T-cell (primary cell): ENCODE measurements at regions of chr3 and their contacts with region 1.

Region 1: GRCh38 chr3:132445817-132446216 is 28.5 kb downstream of the DNAJC13 start:
- DNase-seq: no peak
- ATAC-seq: no peak
- H3K4me3 ChIP-seq: no peak overlapping the region
- H3K4me3 Mint-ChIP-seq: no peak overlapping the region
- H3K27ac ChIP-seq: no peak overlapping the region
- H3K27ac Mint-ChIP-seq: no peak overlapping the region
- H3K4me1 ChIP-seq: peaks cover 0 to 8% of the 10 kb centered on the region in 2 experiments
- H3K4me1 Mint-ChIP-seq: peaks cover 9 to 26% (median 26%) of the 10 kb centered on the region in 3 donors
- H3K27me3 ChIP-seq: no peaks in the 10 kb centered on the region
- H3K27me3 Mint-ChIP-seq: no peaks in the 10 kb centered on the region

Region 2: GRCh38 chr3:132124651-132125284 is 321.0 kb before region 1 on chr3:
- CTCF ChIA-PET with region 1: no interaction called
- POLR2A ChIA-PET with region 1: no interaction called
- DNase-seq: no peak
- ATAC-seq: no peak
- H3K4me3 ChIP-seq: no peak overlapping the region
- H3K4me3 Mint-ChIP-seq: no peak overlapping the region
- H3K27ac ChIP-seq: no peak overlapping the region
- H3K27ac Mint-ChIP-seq: no peak overlapping the region
- H3K4me1 ChIP-seq: no peaks in the 10 kb centered on the region
- H3K4me1 Mint-ChIP-seq: no peaks in the 10 kb centered on the region
- H3K27me3 ChIP-seq: no peaks in the 10 kb centered on the region
- H3K27me3 Mint-ChIP-seq: peaks cover 0 to 9% of the 10 kb centered on the region in 2 donors

Region 3: GRCh38 chr3:132352541-132353143 is 93.2 kb before region 1 on chr3:
- CTCF ChIA-PET with region 1: no interaction called
- POLR2A ChIA-PET with region 1: no interaction called
- DNase-seq: peak; percentile 3 to 78 (median 48)
- ATAC-seq: peak; percentile 57 to 82 (median 76)
- H3K4me3 ChIP-seq: no peak overlapping the region
- H3K4me3 Mint-ChIP-seq: no peak overlapping the region
- H3K27ac ChIP-seq: no peak overlapping the region
- H3K27ac Mint-ChIP-seq: no peak overlapping the region
- H3K4me1 ChIP-seq: no peaks in the 10 kb centered on the region
- H3K4me1 Mint-ChIP-seq: peaks cover 0 to 2% (median 0%) of the 10 kb centered on the region in 3 donors
- H3K27me3 ChIP-seq: no peaks in the 10 kb centered on the region
- H3K27me3 Mint-ChIP-seq: peaks cover 0 to 4% of the 10 kb centered on the region in 2 donors

Region 4: DNA sequence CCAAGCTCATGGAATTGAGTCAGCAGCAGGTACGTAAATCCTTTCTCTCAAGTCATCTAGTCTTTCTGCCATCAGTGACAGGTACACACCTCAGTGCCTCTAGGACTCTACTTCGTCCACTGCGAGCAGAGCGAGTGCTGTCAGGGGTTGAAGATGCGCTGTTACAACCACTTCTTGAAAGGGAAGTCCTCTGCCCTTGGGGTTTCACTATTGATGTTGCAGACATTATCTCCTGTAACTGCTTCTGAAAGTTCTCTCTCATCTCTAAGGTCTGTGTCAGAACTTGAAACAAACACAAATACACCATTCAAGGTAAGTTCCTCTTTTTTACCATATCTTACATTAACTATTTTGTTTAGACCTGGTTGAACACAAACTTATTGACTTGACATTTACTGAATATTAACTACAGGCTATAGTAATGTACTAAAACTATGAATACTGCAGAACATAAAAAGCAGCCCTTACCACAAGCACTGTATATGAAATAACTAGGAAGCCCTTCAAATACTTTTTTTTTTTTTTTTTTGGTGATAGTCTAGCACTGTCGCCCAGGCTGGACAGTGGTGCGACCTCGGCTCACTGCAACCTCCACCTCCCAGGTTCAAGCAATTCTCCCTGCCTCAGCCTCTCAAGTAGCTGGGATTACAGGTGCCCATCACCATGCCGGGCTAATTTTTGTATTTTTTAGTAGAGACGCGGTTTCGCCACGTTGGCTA is 1174.4 kb after region 1 on chr3:
- CTCF ChIA-PET with region 1: no interaction called
- POLR2A ChIA-PET with region 1: interaction called in 1 of 2 experiments, 10 read pairs
- DNase-seq: no peak
- ATAC-seq: no peak
- H3K4me3 ChIP-seq: no peak overlapping the region
- H3K4me3 Mint-ChIP-seq: no peak overlapping the region
- H3K27ac ChIP-seq: no peak overlapping the region
- H3K27ac Mint-ChIP-seq: no peak overlapping the region
- H3K4me1 ChIP-seq: no peaks in the 10 kb centered on the region
- H3K4me1 Mint-ChIP-seq: no peaks in the 10 kb centered on the region
- H3K27me3 ChIP-seq: no peaks in the 10 kb centered on the region
- H3K27me3 Mint-ChIP-seq: no peaks in the 10 kb centered on the region